ENCODE measurements at regions of chr3 and their contacts with region 1.

Region 1: DNA sequence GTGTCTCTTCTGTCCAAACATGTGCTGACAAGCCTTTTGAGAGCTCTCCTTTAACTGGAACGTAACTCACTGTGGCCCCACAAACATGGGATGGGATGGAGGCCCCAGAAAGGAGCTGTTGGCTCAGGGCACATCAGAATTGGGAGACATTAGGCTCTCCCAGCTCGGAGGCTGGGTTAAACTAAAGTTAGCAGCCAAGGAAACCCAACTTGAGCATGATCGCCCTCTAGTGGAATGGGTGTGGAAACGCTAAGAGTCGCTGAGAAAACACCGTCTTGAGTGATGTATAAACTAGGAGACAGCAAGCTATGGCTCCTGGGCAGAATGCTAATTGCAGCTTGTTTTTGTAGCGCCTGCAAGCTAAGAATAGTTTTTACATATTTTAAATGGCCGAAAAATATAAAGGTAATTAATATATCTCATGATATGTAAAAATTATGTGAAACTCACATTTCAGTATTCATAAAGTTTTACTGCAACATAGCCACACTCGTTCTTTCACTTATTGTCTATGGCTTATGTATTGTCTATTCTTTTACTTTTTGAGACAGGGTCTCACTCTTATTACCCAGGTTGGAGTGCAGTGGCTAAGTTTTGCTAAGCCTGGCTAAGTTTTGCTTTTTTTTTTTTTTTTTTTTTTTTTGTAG is 138.8 kb upstream of the HACD2 start:
- DNase-seq: peak; percentile 80

Region 2: GRCh38 chr3:123652346-123652984 is 71.2 kb before region 1 on chr3:
- CTCF ChIA-PET with region 1: interaction called, 17 read pairs
- POLR2A ChIA-PET with region 1: interaction called, 3 read pairs
- DNase-seq: peak; percentile 84

Region 3: GRCh38 chr3:123750659-123751420 is 27.2 kb after region 1 on chr3:
- CTCF ChIA-PET with region 1: no interaction called
- POLR2A ChIA-PET with region 1: no interaction called
- DNase-seq: no peak

Region 4: DNA sequence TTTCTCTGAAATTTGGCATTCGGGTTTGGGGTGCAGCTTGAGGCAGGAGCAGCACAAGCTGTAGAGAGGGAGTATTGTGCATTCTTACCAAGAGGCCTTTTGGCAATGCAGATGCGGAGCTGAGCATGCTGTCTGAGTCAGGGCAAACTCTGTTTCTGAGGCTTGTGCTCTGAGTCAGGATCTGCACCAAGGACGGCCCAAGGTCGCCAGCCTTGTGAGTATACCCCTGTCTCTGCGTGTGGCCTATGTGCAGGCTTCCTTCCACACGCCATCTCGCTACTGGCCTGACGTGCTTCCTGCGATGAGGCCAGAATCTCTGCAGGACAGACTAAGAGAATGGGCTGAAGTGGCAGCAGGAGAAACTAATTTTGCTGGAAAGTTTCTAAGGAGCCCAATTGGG is 352.1 kb after region 1 on chr3:
- CTCF ChIA-PET with region 1: no interaction called
- POLR2A ChIA-PET with region 1: no interaction called
- DNase-seq: no peak